Naive thymus-derived CD8-positive, alpha-beta T cell (primary cell): ENCODE measurements at regions of chr11 and their contacts with region 1.

Region 1: DNA sequence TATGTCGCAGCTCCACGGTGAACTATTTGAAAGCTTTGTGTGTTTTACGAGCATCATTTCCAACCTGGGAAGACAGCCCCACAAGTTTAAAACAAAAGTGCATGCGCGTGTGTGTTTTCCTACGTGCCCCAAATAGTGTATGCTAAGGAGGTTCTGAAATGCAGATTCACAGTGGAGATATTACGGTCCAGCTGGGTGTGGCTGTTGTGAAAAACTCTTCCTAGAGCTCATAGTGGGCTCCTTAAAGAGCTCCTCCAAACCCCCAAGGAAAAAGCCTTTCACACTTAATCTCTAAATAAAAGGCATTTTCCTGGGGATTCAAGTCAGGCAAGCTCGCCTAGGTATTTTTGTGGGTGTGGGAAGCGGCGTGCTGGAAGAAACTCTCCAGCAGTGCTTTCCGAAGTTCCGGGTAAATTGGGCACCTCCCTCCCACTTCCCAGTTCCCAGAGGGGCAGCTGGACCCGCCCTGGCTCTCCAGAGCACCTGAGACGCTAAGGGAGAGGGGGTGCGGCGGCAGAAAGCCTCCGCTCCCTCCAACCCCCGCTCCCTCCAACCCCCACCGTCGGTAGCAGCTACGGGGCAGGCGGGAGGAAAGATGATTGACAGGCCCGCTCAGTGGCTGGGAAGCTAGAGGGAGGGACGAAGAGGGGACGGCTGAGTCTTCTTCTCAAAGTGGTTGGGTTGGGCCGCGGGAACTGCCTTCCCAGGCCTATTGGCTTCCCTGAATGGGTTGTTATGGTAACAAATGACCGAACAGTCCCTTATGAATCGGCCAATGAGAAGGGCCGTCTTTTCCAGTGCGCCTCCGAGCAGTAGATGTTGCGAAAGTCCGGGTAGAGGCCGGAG is 558 bp upstream of the PCF11 start:
- DNase-seq: peak in 9 of 10 donors; percentile 87 to 99 (median 98)
- ATAC-seq: peak; percentile 86 to 88
- H3K4me3 Mint-ChIP-seq: peak overlapping the region; percentile 93 to 100 (median 100)
- H3K27ac Mint-ChIP-seq: peak overlapping the region; percentile 99 to 100 (median 100)
- H3K4me1 Mint-ChIP-seq: peaks cover 10 to 27% (median 25%) of the 10 kb centered on the region in 4 donors
- H3K27me3 Mint-ChIP-seq: no peaks in the 10 kb centered on the region

Region 2: DNA sequence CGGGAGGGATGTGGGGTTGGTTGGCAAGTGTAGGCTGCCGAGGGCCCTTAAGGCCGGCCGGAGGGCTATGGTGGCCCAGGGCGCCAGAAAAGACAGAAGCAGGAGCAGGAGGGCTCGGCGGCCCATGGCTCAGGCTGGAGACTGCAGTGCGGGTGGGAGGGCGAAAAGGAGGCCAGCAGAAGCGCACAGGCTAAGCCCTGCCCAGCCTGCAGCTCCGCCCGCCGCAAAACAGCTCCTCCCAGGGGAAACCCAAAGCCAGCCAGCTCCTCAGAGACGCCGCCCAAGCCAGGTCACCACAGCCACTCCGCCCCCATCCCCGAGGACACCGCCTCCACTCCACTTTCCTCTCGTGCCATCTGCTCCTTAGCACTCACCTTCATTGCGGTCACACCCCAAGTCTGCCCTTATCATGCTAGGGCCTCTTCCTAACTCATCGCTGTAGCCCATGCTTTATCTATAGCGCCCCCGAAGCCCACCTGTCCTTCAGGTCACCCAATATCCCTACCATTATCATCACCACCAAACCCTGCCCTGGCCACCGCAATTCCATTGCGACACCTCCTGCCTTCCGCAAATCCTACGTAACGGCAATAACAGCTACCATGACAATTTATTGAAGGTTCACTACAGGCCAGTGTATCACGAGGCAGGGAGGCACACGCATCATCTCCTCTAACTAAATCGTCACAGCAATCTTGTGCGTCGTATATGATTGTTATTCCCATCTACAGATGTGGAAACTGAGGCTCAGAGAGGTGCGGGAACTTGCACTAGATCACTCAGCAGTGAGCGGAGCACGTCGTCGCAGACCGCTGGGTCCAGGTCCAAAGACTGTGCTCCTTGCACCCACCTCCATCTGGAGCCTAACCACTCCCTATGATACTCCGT is 255.9 kb before region 1 on chr11 and contains the start of gene PRCP:
- POLR2A ChIA-PET with region 1: interaction called, 69 read pairs
- DNase-seq: peak; percentile 82 to 95 (median 91)
- ATAC-seq: peak; percentile 71 to 76
- H3K4me3 Mint-ChIP-seq: peak within 1 kb of the TSS; percentile 90 to 100 (median 100)
- H3K27ac Mint-ChIP-seq: peak within 1 kb of the TSS; percentile 92 to 100 (median 100)
- H3K4me1 Mint-ChIP-seq: peaks cover 26 to 55% (median 49%) of the 10 kb centered on the region in 4 donors
- H3K27me3 Mint-ChIP-seq: no peaks in the 10 kb centered on the region
- polyA plus RNA-seq, gene PRCP: 48.3 to 50.2 (median 49.3) TPM

Region 3: DNA sequence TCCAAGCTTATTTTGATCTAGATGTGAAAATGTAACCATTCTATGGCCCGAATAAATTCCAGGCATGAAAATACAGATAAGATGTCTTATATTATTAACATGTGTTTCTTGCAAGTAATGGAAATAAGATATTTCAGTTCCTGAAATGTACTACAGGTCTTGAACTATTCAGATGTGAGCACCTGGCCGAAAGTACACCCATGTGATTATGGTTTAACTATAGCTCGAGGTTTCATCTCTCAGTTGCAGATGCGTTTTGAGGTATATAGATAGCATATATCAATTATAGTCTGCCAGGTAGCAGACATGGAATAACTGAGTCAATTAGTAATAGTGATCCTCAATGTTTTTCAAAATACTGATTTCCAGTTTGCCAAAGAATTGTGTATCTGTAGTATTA is 186.6 kb before region 1 on chr11:
- POLR2A ChIA-PET with region 1: interaction called, 10 read pairs
- DNase-seq: no peak
- ATAC-seq: peak; percentile 15 to 26
- H3K4me3 Mint-ChIP-seq: peak overlapping the region in 8 of 10 donors; percentile 28 to 66 (median 54)
- H3K27ac Mint-ChIP-seq: peak overlapping the region in 9 of 10 donors; percentile 13 to 93 (median 84)
- H3K4me1 Mint-ChIP-seq: peaks cover 30 to 70% (median 64%) of the 10 kb centered on the region in 4 donors
- H3K27me3 Mint-ChIP-seq: no peaks in the 10 kb centered on the region

Region 4: GRCh38 chr11:83087035-83087434 is 69.3 kb before region 1 on chr11:
- POLR2A ChIA-PET with region 1: interaction called, 11 read pairs
- DNase-seq: no peak
- ATAC-seq: peak in 1 of 2 donors; percentile 42
- H3K4me3 Mint-ChIP-seq: no peak overlapping the region
- H3K27ac Mint-ChIP-seq: peak overlapping the region; percentile 1 to 74 (median 49)
- H3K4me1 Mint-ChIP-seq: peaks cover 11 to 31% (median 20%) of the 10 kb centered on the region in 4 donors
- H3K27me3 Mint-ChIP-seq: no peaks in the 10 kb centered on the region

Region 5: GRCh38 chr11:83174008-83174407 is 17.6 kb after region 1 on chr11:
- POLR2A ChIA-PET with region 1: interaction called, 23 read pairs
- DNase-seq: no peak
- ATAC-seq: peak in 1 of 2 donors; percentile 18
- H3K4me3 Mint-ChIP-seq: peak overlapping the region; percentile 24 to 78 (median 52)
- H3K27ac Mint-ChIP-seq: peak overlapping the region in 4 of 10 donors; percentile 13 to 78 (median 48)
- H3K4me1 Mint-ChIP-seq: peaks cover 30 to 77% (median 66%) of the 10 kb centered on the region in 4 donors
- H3K27me3 Mint-ChIP-seq: no peaks in the 10 kb centered on the region

Region 6: GRCh38 chr11:83285771-83286528 is 129.6 kb after region 1 on chr11 and contains the start of gene CCDC90B:
- POLR2A ChIA-PET with region 1: interaction called, 22 read pairs
- DNase-seq: peak; percentile 78 to 99 (median 94)
- ATAC-seq: peak; percentile 90 to 91
- H3K4me3 Mint-ChIP-seq: peak within 1 kb of the TSS; percentile 89 to 99 (median 98)
- H3K27ac Mint-ChIP-seq: peak within 1 kb of the TSS; percentile 98 to 100 (median 100)
- H3K4me1 Mint-ChIP-seq: peaks cover 16 to 51% (median 37%) of the 10 kb centered on the region in 4 donors
- H3K27me3 Mint-ChIP-seq: peaks cover 0 to 1% (median 0%) of the 10 kb centered on the region in 5 donors
- polyA plus RNA-seq, gene CCDC90B: 48.5 to 54.7 (median 52.1) TPM